ENCODE measurements at regions of chr2 and their contacts with region 1.

Region 1: GRCh38 chr2:31138037-31138962 is at the start of gene GALNT14:
- DNase-seq: peak; percentile 98
- H3K4me3 ChIP-seq: peak within 1 kb of the TSS; percentile 55 to 64
- H3K27ac ChIP-seq: peak within 1 kb of the TSS in 1 of 2 experiments; percentile 68; a peak in 2 of 4 replicates
- H3K4me1 ChIP-seq: peaks cover 0 to 22% of the 10 kb centered on the region in 2 experiments; a peak in 1 of 4 replicates
- H3K27me3 ChIP-seq: peaks cover 57% of the 10 kb centered on the region
- CTCF ChIP-seq: peak; percentile 52
- EP300 ChIP-seq: peak in 1 of 2 experiments; percentile 16; a peak in 1 of 4 replicates
- RAD21 ChIP-seq: peak; percentile 67
- polyA plus RNA-seq, gene GALNT14: 1.6 and 1.8 TPM in 2 replicates

Region 2: GRCh38 chr2:30899516-30900054 is 238.7 kb before region 1 on chr2:
- CTCF ChIA-PET with region 1: interaction called, 11 read pairs
- POLR2A ChIA-PET with region 1: no interaction called
- DNase-seq: no peak
- H3K4me3 ChIP-seq: no peak overlapping the region
- H3K27ac ChIP-seq: no peak overlapping the region
- H3K4me1 ChIP-seq: no peaks in the 10 kb centered on the region; a peak in 1 of 4 replicates
- H3K27me3 ChIP-seq: no peaks in the 10 kb centered on the region
- CTCF ChIP-seq: no peak
- EP300 ChIP-seq: no peak
- RAD21 ChIP-seq: no peak

Region 3: GRCh38 chr2:30985493-30986230 is 152.6 kb before region 1 on chr2:
- CTCF ChIA-PET with region 1: interaction called, 17 read pairs
- POLR2A ChIA-PET with region 1: no interaction called
- DNase-seq: peak; percentile 75
- H3K4me3 ChIP-seq: no peak overlapping the region
- H3K27ac ChIP-seq: peak overlapping the region in 1 of 2 experiments; percentile 96; a peak in 2 of 4 replicates
- H3K4me1 ChIP-seq: peaks cover 0 to 80% of the 10 kb centered on the region in 2 experiments; a peak in 2 of 4 replicates
- H3K27me3 ChIP-seq: no peaks in the 10 kb centered on the region
- CTCF ChIP-seq: no peak
- EP300 ChIP-seq: no peak
- RAD21 ChIP-seq: 0 out of 2 replicates have a peak, but pooled peaks have one; percentile 15

Region 4: DNA sequence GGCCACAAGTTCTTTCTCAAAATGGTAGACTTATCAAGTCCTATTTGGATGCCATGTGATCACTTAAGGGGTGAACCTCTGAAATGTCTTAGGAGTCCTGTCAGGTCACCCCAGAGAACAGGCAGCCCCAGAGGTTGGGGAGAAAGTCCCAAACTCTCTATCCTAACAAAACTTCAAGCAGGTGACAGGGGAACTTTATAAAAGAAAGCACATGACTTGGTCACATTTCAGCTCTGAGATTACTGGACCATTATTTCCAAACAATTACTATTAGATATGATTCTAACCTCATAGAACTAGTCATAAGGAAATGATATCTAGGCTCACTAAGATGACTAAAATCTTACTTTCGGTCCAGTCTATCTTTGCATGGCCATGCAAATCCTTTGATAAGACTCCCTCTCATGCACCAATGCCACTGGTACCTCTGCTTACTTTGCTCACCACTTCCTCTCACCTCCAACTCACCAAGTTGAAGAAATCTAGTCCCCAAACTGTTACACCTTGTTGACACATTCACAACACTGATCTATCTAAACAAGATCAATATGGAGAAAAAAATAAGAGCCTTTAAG is 107.1 kb before region 1 on chr2:
- CTCF ChIA-PET with region 1: interaction called, 12 read pairs
- POLR2A ChIA-PET with region 1: no interaction called
- DNase-seq: no peak
- H3K4me3 ChIP-seq: no peak overlapping the region
- H3K27ac ChIP-seq: no peak overlapping the region
- H3K4me1 ChIP-seq: peaks cover 0 to 10% of the 10 kb centered on the region in 2 experiments; a peak in 1 of 4 replicates
- H3K27me3 ChIP-seq: no peaks in the 10 kb centered on the region
- CTCF ChIP-seq: no peak
- EP300 ChIP-seq: no peak
- RAD21 ChIP-seq: no peak

Region 5: GRCh38 chr2:31125918-31126695 is 12.2 kb before region 1 on chr2:
- CTCF ChIA-PET with region 1: interaction called, 33 read pairs
- POLR2A ChIA-PET with region 1: no interaction called
- DNase-seq: no peak
- H3K4me3 ChIP-seq: no peak overlapping the region
- H3K27ac ChIP-seq: no peak overlapping the region
- H3K4me1 ChIP-seq: peaks cover 0 to 17% of the 10 kb centered on the region in 2 experiments; a peak in 2 of 4 replicates
- H3K27me3 ChIP-seq: peaks cover 6% of the 10 kb centered on the region; the same call in 1 of the 2 replicates
- CTCF ChIP-seq: no peak
- EP300 ChIP-seq: no peak
- RAD21 ChIP-seq: no peak

Measured in SK-N-SH (cell line).